Gastrocnemius medialis (tissue), 4 donors: ENCODE measurements at regions of chr22 and their contacts with region 1.

Region 1: DNA sequence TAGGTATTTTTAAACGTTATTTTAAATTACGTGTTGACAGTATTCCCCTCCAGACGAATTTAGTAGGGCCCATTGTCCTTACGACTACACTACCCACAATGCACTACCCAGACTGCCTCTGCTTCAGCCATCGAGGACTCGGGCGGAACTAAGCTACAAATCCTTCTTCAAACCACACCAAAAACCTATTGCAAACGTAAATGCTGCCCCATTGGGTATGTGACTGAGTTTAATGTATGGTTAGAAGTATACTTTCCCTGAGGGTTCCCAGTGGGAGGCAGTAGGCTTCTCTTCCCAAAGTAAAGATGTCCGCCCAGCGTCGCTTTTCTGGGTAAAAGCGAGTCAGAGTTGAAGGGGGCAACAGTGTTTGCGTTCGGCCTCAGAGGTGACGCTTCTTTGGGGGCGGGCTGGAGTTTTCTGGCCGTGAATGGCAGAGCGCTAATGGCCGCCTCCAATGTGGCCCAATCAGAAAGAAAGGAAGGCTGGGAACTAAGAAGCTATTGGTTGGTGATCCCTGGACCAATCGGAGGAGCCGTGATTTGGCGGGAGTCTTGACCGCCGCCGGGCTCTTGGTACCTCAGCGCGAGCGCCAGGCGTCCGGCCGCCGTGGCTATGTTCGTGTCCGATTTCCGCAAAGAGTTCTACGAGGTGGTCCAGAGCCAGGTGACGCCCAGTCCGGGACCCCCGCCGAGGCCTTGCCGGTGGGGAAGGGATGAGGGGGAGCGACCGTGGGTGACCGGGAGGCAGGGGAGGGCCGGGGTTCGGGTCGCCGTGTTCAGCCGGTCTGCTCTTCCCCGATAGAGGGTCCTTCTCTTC is at the start of gene CDC45:
- DNase-seq: peak; percentile 96 to 97
- ATAC-seq: peak; percentile 92 to 95
- H3K4me3 ChIP-seq: peak within 1 kb of the TSS; percentile 63 to 78 (median 70)
- H3K27ac ChIP-seq: peak within 1 kb of the TSS; percentile 90 to 98 (median 97)
- H3K4me1 ChIP-seq: peaks cover 33 to 35% of the 10 kb centered on the region in 2 donors
- H3K27me3 ChIP-seq: no peaks in the 10 kb centered on the region
- CTCF ChIP-seq: no peak
- POLR2A ChIP-seq: no peak
- total RNA-seq, gene CDC45: 0.27 TPM in 1 of 4 donors, not detected in the others

Region 2: DNA sequence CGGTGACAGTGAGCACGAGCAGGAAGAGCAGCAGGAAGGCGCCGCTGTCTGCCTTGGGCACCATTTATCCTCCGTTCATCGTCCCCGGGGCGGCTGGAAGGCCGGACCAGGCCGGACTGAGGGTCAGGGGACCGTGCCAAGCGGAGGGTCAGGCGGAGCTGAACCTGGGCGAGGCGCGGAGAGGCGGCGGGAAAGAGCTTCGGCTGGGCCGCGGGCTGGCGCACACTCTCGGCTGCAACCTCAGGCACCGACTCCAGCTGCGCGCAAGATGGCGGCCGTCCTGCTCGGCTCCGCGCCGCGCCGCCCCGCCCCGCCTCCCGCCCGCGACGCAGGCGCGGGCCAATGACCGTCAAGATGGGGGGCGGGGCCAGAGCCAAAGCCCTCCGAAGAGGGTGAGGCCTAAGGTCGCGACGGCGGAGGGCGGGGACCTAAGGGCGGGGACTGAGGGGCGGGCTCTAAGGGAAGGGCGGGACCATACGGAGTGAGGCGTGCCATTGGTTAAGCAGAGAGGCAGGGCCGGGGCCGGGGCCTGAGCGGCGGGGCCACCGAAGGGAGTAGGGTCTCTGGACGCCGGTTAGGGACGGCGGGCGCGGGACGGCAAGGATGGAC is 357.3 kb before region 1 on chr22 and contains the start of gene DGCR2:
- in situ Hi-C with region 1: no loop called
- intact Hi-C with region 1: loop called (anchors 2 kb)
- DNase-seq: peak; percentile 96 to 97
- ATAC-seq: peak; percentile 77 to 87
- H3K4me3 ChIP-seq: peak within 1 kb of the TSS; percentile 76 to 97 (median 86)
- H3K27ac ChIP-seq: peak within 1 kb of the TSS; percentile 91 to 99 (median 97)
- H3K4me1 ChIP-seq: peaks cover 42 to 47% of the 10 kb centered on the region in 2 donors
- H3K27me3 ChIP-seq: no peaks in the 10 kb centered on the region
- CTCF ChIP-seq: no peak
- POLR2A ChIP-seq: peak; percentile 79 to 86
- total RNA-seq, gene DGCR2: 30.0 to 72.7 (median 43.5) TPM

Region 3: DNA sequence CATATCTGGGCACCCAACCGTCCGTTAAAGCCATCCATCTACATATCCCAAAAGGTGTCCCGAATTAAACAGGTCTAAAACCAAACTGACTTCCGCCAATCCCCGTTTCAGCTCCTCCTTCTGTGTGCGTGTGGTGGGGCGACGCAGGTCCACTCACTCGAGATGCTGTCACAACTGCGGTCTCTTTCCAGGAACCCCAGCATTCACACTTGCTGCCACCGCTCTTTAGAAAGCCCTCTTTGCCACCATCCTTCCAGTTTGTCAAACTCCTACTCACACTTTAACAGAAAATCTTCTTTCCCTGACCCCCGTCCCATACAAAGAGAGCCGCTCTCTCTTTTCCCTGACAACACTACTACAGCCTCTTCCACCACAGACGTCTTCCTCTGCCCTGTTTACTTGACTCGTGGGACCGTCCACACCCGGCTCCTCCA is 335.6 kb before region 1 on chr22:
- in situ Hi-C with region 1: no loop called
- intact Hi-C with region 1: loop called (anchors 1 kb)
- DNase-seq: no peak
- ATAC-seq: peak in 1 of 2 donors; percentile 8
- H3K4me3 ChIP-seq: peak overlapping the region; percentile 78 to 96 (median 89)
- H3K27ac ChIP-seq: peak overlapping the region; percentile 81 to 86 (median 84)
- H3K4me1 ChIP-seq: peaks cover 8% of the 10 kb centered on the region in 2 donors
- H3K27me3 ChIP-seq: peaks cover 9 to 12% (median 11%) of the 10 kb centered on the region in 3 donors
- CTCF ChIP-seq: no peak
- POLR2A ChIP-seq: no peak

Region 4: GRCh38 chr22:19178656-19179496 is 300.7 kb before region 1 on chr22 and contains the start of gene SLC25A1:
- in situ Hi-C with region 1: loop called in 1 of 4 experiments (anchors 25 kb)
- intact Hi-C with region 1: loop called (anchors 2 kb)
- DNase-seq: peak; percentile 78 to 87
- ATAC-seq: peak; percentile 67 to 78
- H3K4me3 ChIP-seq: peak within 1 kb of the TSS; percentile 58 to 76 (median 70)
- H3K27ac ChIP-seq: peak within 1 kb of the TSS; percentile 76 to 97 (median 93)
- H3K4me1 ChIP-seq: peaks cover 18 to 28% of the 10 kb centered on the region in 2 donors
- H3K27me3 ChIP-seq: no peaks in the 10 kb centered on the region
- CTCF ChIP-seq: no peak
- POLR2A ChIP-seq: peak; percentile 49 to 57
- total RNA-seq, gene SLC25A1: 10.5 to 16.6 (median 13.5) TPM

Region 5: GRCh38 chr22:19214078-19214473 is 265.5 kb before region 1 on chr22:
- in situ Hi-C with region 1: no loop called
- intact Hi-C with region 1: loop called (anchors 1 kb)
- DNase-seq: no peak
- ATAC-seq: no peak
- H3K4me3 ChIP-seq: no peak overlapping the region
- H3K27ac ChIP-seq: peak overlapping the region in 3 of 4 donors; percentile 83 to 90 (median 90)
- H3K4me1 ChIP-seq: peaks cover 26 to 43% of the 10 kb centered on the region in 2 donors
- H3K27me3 ChIP-seq: no peaks in the 10 kb centered on the region
- CTCF ChIP-seq: no peak
- POLR2A ChIP-seq: no peak

Region 6: GRCh38 chr22:19432133-19432851 is 47.3 kb before region 1 on chr22 and contains the start of gene MRPL40:
- in situ Hi-C with region 1: no loop called
- intact Hi-C with region 1: loop called (anchors 1 kb)
- DNase-seq: peak; percentile 93
- ATAC-seq: peak; percentile 77 to 79
- H3K4me3 ChIP-seq: peak within 1 kb of the TSS; percentile 75 to 96 (median 88)
- H3K27ac ChIP-seq: peak within 1 kb of the TSS; percentile 91 to 100 (median 100)
- H3K4me1 ChIP-seq: peaks cover 31 to 37% of the 10 kb centered on the region in 2 donors
- H3K27me3 ChIP-seq: no peaks in the 10 kb centered on the region
- CTCF ChIP-seq: peak in 1 of 5 experiments; percentile 21
- POLR2A ChIP-seq: peak; percentile 91 to 95
- total RNA-seq, gene MRPL40: 53.8 to 75.1 (median 61.5) TPM

Region 7: GRCh38 chr22:19447388-19448075 is 32.0 kb before region 1 on chr22 and contains the start of gene C22orf39:
- in situ Hi-C with region 1: no loop called
- intact Hi-C with region 1: loop called (anchors 1 kb)
- DNase-seq: peak; percentile 93 to 94
- ATAC-seq: peak; percentile 90
- H3K4me3 ChIP-seq: peak within 1 kb of the TSS; percentile 77 to 93 (median 86)
- H3K27ac ChIP-seq: peak within 1 kb of the TSS; percentile 91 to 100 (median 96)
- H3K4me1 ChIP-seq: peaks cover 46 to 51% of the 10 kb centered on the region in 2 donors
- H3K27me3 ChIP-seq: no peaks in the 10 kb centered on the region
- CTCF ChIP-seq: peak in 3 of 5 experiments; percentile 6 to 16 (median 10)
- POLR2A ChIP-seq: peak; percentile 91 to 95
- total RNA-seq, gene C22orf39: 157 to 182 (median 178) TPM

Region 8: DNA sequence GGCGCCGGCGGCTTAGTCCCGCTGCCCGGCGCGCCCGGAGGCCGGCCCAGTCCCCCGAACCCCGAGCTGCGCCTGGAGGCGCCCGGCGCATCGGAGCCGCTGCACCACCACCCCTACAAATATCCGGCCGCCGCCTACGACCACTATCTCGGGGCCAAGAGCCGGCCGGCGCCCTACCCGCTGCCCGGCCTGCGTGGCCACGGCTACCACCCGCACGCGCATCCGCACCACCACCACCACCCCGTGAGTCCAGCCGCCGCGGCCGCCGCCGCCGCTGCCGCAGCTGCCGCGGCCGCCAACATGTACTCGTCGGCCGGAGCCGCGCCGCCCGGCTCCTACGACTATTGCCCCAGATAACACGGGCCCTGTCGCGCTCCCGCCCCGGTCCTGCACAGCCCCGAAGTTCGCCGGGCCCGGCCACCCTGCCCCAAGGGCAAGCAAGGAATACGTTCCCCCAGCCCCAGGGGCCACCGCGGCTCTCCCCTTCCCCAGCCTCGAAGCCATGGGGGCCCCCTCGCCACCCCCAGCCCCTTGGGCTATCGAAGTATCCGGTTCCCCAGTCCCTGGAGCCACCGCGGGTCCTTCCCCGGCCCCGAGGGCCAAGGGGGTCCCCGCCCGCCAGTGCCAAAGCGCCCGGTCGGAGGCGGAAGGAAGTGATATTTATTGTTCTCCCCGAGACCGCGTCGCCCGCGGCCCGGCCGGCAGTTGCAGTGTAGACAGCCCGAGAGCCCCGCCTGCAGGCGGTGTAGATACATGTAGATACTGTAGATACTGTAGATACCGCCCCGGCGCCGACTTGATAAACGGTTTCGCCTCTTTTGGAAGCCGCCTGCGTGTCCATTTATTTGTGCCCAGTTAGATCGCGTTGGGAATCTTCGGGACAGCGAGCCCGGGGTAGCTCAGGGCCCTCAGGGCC is 287.2 kb after region 1 on chr22:
- in situ Hi-C with region 1: no loop called
- intact Hi-C with region 1: no loop called
- DNase-seq: peak; percentile 23 to 65
- ATAC-seq: peak; percentile 79 to 81
- H3K4me3 ChIP-seq: peak overlapping the region; percentile 46 to 60 (median 48)
- H3K27ac ChIP-seq: no peak overlapping the region
- H3K4me1 ChIP-seq: peaks cover 0 to 4% of the 10 kb centered on the region in 2 donors
- H3K27me3 ChIP-seq: peaks cover 4 to 32% (median 22%) of the 10 kb centered on the region in 3 donors
- CTCF ChIP-seq: peak in 4 of 5 experiments; percentile 42 to 55 (median 48)
- POLR2A ChIP-seq: no peak